Endothelial cell of umbilical vein (primary cell): ENCODE measurements at regions of chr14 and their contacts with region 1.

Region 1: DNA sequence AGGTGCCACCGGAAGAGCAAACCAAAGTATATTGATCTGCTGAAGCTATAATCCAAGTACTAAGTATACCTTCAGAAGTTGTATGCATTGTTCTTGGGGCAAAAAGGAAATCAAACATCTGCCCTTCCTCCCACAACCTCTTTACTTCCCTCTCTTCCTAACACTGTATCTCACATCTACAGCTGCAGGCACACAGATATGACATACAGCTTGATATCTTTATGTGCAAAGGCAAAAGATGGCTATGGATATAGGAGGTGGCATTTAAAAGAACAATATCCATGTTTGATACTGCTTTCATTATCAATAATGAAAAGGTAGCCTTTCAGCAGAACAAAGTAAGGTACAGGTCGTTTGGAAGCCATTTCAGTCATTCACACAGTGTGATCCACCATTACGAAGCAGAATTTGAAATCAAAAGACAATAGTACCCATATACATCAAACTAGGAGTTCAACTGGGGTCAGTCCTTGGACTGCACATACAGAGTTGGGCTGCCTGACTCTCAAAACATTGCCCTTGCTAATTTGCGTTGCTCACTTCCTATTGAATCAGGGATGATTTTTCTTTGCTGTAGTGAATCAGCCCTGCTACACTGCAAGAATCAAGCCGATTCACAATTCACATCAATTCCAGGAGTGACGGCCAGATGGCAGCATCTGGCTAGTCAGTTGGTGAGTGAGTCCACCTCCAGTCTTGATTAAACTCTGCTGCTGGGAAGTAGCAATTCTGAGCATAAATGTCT is 8.9 kb downstream of the ANG start:
- DNase-seq: peak; percentile 89
- H3K4me3 ChIP-seq: no peak overlapping the region
- H3K27ac ChIP-seq: peak overlapping the region; percentile 30
- H3K4me1 ChIP-seq: peaks cover 11% of the 10 kb centered on the region
- H3K27me3 ChIP-seq: no peaks in the 10 kb centered on the region
- CTCF ChIP-seq: peak; percentile 73 to 90
- POLR2A ChIP-seq: no peak

Region 2: GRCh38 chr14:20866963-20867362 is 169.5 kb after region 1 on chr14:
- CTCF ChIA-PET with region 1: interaction called, 23 read pairs
- POLR2A ChIA-PET with region 1: no interaction called
- dilution Hi-C with region 1: no loop called
- intact Hi-C with region 1: no loop called
- DNase-seq: peak; percentile 24
- H3K4me3 ChIP-seq: no peak overlapping the region
- H3K27ac ChIP-seq: no peak overlapping the region
- H3K4me1 ChIP-seq: no peaks in the 10 kb centered on the region
- H3K27me3 ChIP-seq: peaks cover 7 to 22% of the 10 kb centered on the region in 2 experiments
- CTCF ChIP-seq: peak; percentile 31 to 51
- POLR2A ChIP-seq: no peak

Region 3: DNA sequence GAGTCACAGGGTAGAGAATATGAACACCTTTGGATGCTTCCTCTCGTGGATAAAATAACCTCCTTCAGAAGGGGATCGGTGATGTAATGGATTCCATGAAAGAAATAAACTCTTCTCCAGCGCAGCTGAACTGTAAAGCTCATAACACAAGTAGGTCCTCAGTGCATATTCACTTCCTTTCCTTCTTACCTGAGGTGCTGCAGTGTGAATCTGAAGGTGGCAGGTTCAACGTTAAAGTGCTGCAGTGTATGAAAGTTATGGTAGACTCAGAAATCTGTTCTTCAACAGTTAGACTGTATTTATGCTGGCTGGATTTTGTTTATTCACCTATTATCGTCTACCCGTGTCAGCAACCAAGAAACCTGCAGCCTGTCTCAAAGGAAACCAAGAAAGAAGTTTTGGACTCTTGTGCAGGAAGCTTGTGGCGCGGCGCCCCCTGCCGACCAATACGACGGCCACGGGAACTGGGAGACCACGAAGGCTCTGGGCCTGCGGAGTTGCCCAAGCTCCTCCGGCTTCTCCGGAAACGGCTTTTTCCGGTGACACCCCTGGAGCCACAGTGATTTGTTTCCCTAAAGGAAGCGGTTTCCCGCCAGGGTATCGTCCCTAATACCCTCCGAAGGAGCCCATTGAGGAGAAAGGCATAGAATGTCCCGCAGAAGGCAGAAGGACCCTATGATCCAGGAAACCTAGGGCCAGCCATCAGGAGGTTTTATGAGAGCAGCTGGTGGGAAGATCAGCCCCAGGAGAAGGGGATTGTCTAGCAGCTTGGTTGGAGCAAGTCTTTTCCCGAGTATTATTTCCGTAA is 176.1 kb after region 1 on chr14:
- CTCF ChIA-PET with region 1: interaction called, 23 read pairs
- POLR2A ChIA-PET with region 1: no interaction called
- dilution Hi-C with region 1: no loop called
- intact Hi-C with region 1: loop called (anchors 1 kb)
- DNase-seq: peak; percentile 73
- H3K4me3 ChIP-seq: peak overlapping the region in 1 of 3 experiments; percentile 15
- H3K27ac ChIP-seq: no peak overlapping the region
- H3K4me1 ChIP-seq: peaks cover 7% of the 10 kb centered on the region
- H3K27me3 ChIP-seq: peaks cover 5 to 8% of the 10 kb centered on the region in 2 experiments
- CTCF ChIP-seq: peak; percentile 87 to 95
- POLR2A ChIP-seq: no peak